Activated naive CD4-positive, alpha-beta T cell treated with anti-CD3 and anti-CD28 coated beads for 36 hours (primary cell): ENCODE measurements at regions of chrX and their contacts with region 1.

Region 1: DNA sequence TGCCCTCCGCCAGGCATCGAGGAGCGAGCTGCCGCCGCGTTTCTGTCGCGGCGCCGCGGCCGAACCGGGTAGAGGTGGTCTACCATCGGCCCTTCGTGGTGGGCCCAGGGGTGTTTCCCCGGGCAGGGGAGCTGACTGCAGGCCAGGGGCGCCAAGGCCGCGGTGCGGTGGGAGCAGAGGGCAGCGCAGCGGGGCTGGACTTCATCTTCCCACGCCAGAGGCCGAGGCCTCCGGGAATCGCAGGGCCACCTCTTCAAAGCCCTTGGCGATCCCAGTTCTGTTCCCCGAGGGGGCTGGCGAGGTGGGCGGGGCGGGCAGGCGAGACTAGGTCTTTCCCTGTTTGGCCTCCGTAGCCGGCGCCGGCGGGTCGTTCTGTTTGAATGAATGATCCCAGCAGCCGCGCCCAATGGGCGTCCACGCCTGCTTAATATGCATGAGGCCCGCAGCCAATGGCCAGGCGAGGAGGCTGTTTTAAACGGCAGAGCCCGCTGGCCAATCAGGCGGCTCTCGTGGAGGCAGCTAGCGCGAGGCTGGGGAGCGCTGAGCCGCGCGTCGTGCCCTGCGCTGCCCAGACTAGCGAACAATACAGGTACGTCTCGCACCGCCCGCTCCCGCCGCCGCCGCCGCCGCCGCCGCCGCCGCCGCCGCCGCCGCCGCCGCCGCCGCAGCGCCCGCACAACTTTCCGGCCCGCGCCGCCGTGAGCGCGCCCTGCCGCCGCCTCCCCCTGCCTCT is at the start of gene HMGB3:
- DNase-seq: peak; percentile 90
- H3K4me3 Mint-ChIP-seq: peak within 1 kb of the TSS; percentile 69
- H3K27ac Mint-ChIP-seq: no peak within 1 kb of the TSS
- H3K4me1 Mint-ChIP-seq: peaks cover 13% of the 10 kb centered on the region
- H3K27me3 Mint-ChIP-seq: peaks cover 5% of the 10 kb centered on the region
- total RNA-seq, gene HMGB3: 30.8 to 33.9 TPM

Region 2: GRCh38 chrX:149504915-149505651 is 1477.9 kb before region 1 on chrX and contains the start of gene IDS:
- CTCF ChIA-PET with region 1: no interaction called
- intact Hi-C with region 1: loop called (anchors 10 kb)
- DNase-seq: peak; percentile 89
- H3K4me3 Mint-ChIP-seq: peak within 1 kb of the TSS; percentile 86
- H3K27ac Mint-ChIP-seq: peak within 1 kb of the TSS; percentile 93
- H3K4me1 Mint-ChIP-seq: peaks cover 26% of the 10 kb centered on the region
- H3K27me3 Mint-ChIP-seq: no peaks in the 10 kb centered on the region
- total RNA-seq, gene IDS: 39.9 to 43.1 TPM

Region 3: GRCh38 chrX:150568320-150569154 is 414.4 kb before region 1 on chrX and contains the start of gene MTM1:
- CTCF ChIA-PET with region 1: no interaction called
- intact Hi-C with region 1: loop called (anchors 2 kb)
- DNase-seq: peak; percentile 93
- H3K4me3 Mint-ChIP-seq: peak within 1 kb of the TSS; percentile 78
- H3K27ac Mint-ChIP-seq: peak within 1 kb of the TSS; percentile 97
- H3K4me1 Mint-ChIP-seq: peaks cover 32% of the 10 kb centered on the region
- H3K27me3 Mint-ChIP-seq: no peaks in the 10 kb centered on the region
- total RNA-seq, gene MTM1: 17.8 to 19.2 TPM

Region 4: DNA sequence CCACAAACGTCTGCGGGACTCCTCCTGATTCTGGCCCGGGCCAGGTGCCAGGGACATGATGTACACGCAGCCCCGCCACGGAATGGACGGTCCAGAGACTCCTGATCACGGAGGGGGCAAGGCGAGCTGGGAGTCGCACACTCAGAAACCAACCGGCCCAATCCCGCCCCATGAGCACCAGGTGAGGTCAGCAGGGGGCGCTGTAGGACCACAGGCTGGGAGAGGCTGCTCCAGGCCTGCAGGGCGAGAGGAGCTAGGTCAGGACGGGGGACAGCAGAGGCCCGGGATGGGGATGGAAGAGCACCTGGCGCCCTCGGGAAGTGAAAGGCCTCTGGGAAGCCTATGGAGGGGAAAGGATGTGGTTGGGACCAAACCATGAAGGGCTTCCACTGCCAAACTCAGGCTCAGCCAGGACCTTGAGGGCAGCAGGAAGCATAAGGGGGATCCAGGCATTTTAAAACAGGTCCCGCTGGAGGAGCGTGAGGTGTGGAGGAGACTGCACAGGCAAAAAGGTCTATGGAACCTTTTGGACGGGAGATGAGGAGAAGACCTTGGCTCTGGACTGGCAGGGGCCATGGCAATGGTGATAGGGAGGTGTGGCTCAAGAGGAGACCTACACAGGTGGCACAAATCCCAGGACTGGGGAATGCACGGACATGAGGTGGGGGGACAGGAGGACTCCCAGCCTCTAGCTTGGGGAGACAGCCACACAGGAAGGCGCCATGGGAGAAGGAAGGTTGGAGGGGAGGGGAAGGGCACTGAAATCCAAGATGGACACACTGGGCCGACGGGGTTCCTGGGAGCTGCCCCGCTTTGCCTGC is 210.6 kb before region 1 on chrX:
- CTCF ChIA-PET with region 1: interaction called, 3 read pairs
- intact Hi-C with region 1: loop called (anchors 2 kb)
- DNase-seq: peak; percentile 84
- H3K4me3 Mint-ChIP-seq: no peak overlapping the region
- H3K27ac Mint-ChIP-seq: no peak overlapping the region
- H3K4me1 Mint-ChIP-seq: peaks cover 6% of the 10 kb centered on the region
- H3K27me3 Mint-ChIP-seq: no peaks in the 10 kb centered on the region

Region 5: DNA sequence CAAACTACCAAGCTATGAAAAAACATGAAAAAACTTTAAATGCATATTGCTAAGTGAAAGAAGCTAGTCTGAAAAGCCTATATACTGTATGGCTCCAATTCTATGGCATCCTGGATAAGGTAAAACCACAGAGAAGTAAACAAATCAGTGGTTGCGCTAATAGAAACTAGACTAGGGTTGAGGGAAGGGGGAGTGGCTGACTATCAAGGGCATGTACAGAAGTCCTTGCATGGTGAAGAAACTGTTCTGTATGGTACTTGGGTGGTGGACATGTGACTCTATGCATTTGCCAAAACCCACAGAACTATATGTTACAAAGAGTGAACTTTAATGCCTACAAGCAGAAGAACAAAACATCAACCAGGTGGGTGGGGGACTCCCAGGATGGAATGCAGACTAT is 192.9 kb before region 1 on chrX:
- CTCF ChIA-PET with region 1: no interaction called
- intact Hi-C with region 1: no loop called
- DNase-seq: no peak
- H3K4me3 Mint-ChIP-seq: no peak overlapping the region
- H3K27ac Mint-ChIP-seq: no peak overlapping the region
- H3K4me1 Mint-ChIP-seq: no peaks in the 10 kb centered on the region
- H3K27me3 Mint-ChIP-seq: no peaks in the 10 kb centered on the region

Region 6: GRCh38 chrX:150879855-150880808 is 102.8 kb before region 1 on chrX:
- CTCF ChIA-PET with region 1: no interaction called
- intact Hi-C with region 1: loop called (anchors 2 kb)
- DNase-seq: peak; percentile 8
- H3K4me3 Mint-ChIP-seq: no peak overlapping the region
- H3K27ac Mint-ChIP-seq: peak overlapping the region; percentile 54
- H3K4me1 Mint-ChIP-seq: peaks cover 36% of the 10 kb centered on the region
- H3K27me3 Mint-ChIP-seq: no peaks in the 10 kb centered on the region

Region 7: DNA sequence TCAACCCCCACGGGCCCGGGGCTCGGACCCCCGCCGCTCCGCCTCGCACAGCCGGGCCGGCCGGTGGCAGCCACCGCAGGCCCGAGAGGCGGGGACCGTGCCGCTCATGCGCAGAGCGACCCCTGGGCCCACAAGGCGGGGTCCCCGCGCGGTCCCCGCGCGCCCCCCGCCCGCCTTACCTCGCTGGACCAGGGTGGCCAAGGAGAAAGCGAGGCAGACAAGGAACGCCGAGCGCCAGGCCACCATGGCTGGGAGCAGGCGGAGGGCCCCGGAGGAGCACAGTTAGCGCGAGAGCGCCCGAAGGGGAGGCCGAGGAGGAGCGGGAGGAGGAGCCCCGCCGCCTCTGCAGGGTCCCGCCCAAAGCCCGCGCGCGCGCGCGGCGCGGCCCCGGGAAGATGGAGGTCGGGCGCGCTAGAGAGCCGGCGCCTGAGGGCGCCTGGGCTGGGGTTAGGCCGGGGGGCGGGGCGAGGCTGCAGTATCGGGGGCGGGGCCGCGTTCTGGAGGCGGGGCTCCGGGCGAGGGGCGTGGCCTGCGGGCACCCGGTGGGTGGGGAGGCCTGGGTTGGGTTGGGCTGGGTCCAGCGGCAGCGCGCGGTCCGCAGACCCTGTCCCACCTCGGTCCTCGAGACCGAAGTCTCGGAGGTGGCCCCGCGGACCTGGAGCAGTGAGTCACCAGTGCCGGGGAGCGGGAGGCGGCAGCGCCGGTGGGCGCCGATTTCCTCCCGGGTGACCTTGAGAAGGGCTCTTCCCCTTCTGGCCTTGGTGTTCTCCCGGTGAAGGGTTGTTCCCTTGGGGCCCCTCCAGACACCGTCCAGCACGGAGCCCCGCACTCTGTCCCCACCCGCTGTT is 84.4 kb before region 1 on chrX and contains the start of gene CD99L2:
- CTCF ChIA-PET with region 1: no interaction called
- intact Hi-C with region 1: loop called (anchors 1 kb)
- DNase-seq: peak; percentile 88
- H3K4me3 Mint-ChIP-seq: peak within 1 kb of the TSS; percentile 75
- H3K27ac Mint-ChIP-seq: peak within 1 kb of the TSS; percentile 50
- H3K4me1 Mint-ChIP-seq: peaks cover 10% of the 10 kb centered on the region
- H3K27me3 Mint-ChIP-seq: no peaks in the 10 kb centered on the region
- total RNA-seq, gene CD99L2: 11.3 to 11.7 TPM

Region 8: DNA sequence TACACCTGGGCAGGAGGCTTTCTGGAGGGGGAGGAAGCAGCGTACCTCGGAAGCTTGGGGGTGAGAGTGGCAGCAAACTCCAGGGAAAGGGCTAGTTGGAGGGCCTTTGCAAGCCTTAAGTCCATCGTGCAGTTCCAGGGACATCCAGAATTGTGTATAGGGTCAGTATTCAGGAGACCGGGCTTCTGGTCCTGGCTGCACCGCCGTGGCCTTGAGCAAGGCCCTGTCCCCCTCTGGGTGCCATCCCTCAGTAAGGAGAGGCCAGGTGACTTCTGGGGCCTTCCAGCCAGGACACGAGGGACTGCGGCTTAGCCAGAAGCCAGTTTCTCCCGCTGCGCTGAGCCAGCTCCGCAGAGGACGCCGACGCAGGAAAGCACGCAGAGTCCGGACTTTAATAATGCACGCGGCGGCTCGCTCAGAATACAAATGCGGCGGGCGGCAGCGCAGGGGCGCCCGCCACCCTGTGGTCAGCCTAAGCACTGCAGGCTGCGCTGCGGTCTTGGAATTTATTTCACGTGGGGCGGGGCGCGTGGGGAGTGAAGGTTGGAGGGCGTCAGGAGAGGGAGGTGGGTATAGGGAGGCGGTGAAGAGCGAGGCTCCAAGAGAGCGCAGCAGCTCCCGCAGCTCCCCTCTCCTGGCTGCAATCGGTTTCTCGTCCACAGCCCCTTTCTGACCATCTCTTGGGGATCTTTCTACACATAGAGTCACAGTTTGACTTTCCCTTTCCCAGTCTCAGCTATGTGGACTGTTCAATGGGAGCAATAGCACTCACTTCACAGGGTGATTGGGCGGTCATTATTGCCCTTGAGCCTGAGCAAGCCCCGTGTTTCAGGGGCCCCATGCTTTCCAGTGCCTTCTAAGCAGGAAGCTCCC is 99.4 kb after region 1 on chrX:
- CTCF ChIA-PET with region 1: no interaction called
- intact Hi-C with region 1: loop called (anchors 2 kb)
- DNase-seq: peak; percentile 61
- H3K4me3 Mint-ChIP-seq: no peak overlapping the region
- H3K27ac Mint-ChIP-seq: no peak overlapping the region
- H3K4me1 Mint-ChIP-seq: peaks cover 2% of the 10 kb centered on the region
- H3K27me3 Mint-ChIP-seq: peaks cover 3% of the 10 kb centered on the region